ENCODE measurements at regions of chr1 and their contacts with region 1.

Region 1: GRCh38 chr1:108125312-108126138 is 74.6 kb downstream of the SLC25A24 start:
- ATAC-seq: peak; percentile 97 to 100 (median 99)
- H3K4me3 ChIP-seq: no peak overlapping the region
- H3K27ac ChIP-seq: no peak overlapping the region
- H3K4me1 ChIP-seq: no peaks in the 10 kb centered on the region

Region 2: DNA sequence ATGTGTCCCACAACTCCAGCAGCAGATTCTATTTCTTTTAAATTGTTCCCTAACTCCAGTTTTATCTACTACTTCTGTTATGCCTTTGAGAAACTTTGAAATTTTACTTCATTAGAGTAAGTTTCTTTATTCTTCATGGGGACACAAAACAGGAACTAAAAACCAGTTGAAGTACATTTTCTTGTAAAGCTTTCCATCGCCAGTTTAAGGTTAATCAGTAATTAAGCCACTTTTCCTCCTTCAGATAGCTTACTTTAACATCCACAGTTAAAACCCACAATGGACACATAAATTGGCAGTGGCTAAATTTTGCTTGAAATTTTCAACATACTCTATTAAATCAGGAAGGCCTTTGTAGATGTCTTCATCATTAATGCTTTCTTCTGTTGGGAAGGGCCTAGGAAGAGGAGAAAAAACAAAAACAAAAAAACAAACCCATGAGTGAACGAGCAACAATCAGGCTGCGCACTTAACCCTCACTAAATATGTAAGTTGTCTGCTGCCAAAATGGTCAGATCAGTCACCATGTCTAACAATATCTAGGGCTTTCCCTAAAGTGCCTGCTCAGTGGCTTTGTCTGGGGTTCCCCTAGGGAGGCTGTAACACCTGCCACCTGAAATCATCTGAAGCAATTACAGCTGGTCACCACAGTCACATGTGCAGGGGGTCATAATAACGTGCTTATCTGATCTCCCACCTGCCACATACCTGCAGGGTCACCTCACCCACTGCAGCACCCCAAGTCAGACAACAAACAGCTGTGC is 348.4 kb before region 1 on chr1:
- in situ Hi-C with region 1: loop called in 8 of 9 experiments (anchors 5 to 25 kb)
- ATAC-seq: no peak
- H3K4me3 ChIP-seq: no peak overlapping the region
- H3K27ac ChIP-seq: no peak overlapping the region
- H3K4me1 ChIP-seq: no peaks in the 10 kb centered on the region

Region 3: GRCh38 chr1:107782217-107782845 is 343.2 kb before region 1 on chr1:
- in situ Hi-C with region 1: loop called in 8 of 9 experiments (anchors 5 to 25 kb)
- ATAC-seq: peak in 6 of 8 experiments; percentile 46 to 61 (median 51)
- H3K4me3 ChIP-seq: no peak overlapping the region
- H3K27ac ChIP-seq: no peak overlapping the region
- H3K4me1 ChIP-seq: no peaks in the 10 kb centered on the region